Right ventricle myocardium superior (tissue), 1 donor: ENCODE measurements at regions of chr3 and their contacts with region 1.

Region 1: DNA sequence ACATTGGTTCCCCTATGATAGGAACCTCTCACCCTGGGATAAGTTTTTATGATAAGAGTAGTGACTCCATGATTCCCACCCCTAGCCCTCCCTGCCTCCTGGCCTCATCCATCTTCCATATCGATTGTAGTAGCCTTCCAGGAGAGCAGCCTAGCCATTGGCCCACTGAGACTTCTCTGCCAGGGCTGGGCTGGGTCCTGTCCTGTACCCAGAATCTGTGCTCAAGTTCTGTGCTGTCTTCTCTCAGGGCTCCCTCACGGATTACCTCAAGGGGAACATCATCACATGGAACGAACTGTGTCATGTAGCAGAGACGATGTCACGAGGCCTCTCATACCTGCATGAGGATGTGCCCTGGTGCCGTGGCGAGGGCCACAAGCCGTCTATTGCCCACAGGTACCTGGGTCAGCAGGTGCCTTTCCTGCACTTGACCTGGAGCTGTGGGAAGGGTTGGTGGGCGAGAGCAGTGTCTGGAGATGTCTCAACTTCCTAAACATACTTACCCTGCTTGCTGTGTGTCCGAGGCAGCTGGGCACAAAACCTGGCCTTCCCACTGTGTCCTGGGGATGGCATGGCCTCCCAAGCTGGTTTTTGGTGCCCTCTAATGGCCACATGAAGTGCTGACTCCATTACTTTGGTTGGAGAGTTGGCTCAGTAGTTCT is 16.6 kb upstream of the EXOG start:
- DNase-seq: peak; percentile 72
- ATAC-seq: peak; percentile 90

Region 2: DNA sequence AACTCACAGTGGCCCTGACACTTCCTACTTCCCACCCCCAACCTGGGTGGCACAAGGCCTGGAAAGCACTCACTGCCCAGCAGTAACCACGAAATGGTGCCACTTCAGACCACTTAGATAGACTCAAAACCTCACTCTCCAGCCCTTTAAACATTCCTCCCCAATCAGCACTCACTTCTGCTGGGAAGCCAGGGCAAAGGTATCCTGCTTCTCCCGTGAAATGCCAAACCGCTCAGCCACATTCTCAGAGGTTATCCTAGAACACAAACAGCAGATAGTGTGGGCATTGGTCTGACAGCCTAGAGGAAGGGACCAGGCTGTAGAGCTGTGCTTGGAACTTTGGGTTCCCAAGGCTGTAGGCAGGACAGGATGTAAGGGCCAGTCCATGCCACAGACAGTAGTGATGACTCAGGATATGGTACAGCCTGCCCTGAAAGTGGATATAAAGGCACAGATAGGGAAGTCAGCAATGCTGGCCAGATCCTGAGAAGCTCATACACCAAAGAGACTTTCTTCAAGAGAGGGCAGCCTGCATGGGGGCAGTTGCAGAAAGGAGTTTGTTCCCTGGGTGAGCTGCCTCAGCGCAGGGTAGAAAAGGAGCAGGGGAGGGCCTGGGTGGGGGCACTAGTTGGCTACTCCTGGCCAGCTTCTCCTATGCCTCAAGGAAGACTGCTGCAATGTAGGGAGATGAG is 351.8 kb before region 1 on chr3:
- intact Hi-C with region 1: loop called (anchors 10 kb)
- DNase-seq: no peak
- ATAC-seq: peak; percentile 42

Region 3: GRCh38 chr3:38348903-38349302 is 130.7 kb before region 1 on chr3:
- intact Hi-C with region 1: loop called (anchors 2 kb)
- DNase-seq: no peak
- ATAC-seq: no peak